Common myeloid progenitor, CD34-positive (primary cell): ENCODE measurements at regions of chr13 and their contacts with region 1.

Region 1: DNA sequence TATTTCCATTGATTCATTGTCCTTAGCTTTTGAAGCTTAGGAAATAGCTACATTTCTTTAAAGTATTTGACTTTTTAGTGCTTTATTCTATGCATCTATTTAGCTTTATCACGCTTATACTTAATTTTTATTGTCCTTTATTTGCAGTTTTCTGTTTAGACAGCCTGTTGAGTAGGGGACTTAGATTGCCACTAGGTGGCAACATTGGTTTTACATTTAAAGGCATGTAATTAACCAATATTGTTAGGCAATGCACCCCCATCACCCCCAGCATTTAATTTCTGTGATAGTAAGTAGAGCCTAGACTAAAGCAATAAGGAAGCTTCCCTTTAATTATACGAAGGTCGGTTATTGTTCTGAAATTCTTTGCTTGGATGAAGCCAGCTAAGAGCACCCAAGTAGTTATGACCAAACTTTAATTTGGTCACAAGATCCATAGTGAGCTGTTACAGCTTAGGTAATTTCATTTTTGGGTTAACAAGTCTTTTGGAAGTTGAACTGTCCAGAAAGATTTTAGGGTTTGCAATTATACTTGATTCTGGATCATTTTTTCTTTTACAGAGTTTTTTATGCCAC is 36.5 kb downstream of the B3GLCT start:
- DNase-seq: peak; percentile 47 to 65 (median 60)
- H3K4me3 ChIP-seq: no peak overlapping the region
- H3K27ac ChIP-seq: no peak overlapping the region
- H3K4me1 ChIP-seq: no peaks in the 10 kb centered on the region
- H3K27me3 ChIP-seq: no peaks in the 10 kb centered on the region

Region 2: DNA sequence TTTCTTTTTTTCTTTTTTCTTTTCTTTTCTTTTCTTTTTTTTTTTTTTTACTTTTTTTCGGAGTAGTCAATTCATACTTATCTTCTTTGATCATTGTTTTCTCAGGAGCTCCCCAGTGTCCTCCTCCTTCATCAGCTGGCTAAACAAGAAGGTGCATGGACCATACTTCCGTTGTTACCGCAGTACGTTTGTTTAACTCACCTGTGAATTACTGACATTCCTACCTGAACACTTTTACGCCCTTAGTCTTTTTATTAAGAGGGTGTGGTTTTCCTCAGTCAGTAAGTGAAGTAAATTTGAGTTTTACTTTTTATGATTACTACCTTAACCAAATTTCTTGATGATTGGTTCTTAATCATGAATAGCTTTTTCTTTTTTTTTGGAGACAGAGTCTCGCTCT is 10.6 kb after region 1 on chr13:
- CTCF ChIA-PET with region 1: interaction called, 15 read pairs
- POLR2A ChIA-PET with region 1: no interaction called
- DNase-seq: no peak
- H3K4me3 ChIP-seq: no peak overlapping the region
- H3K27ac ChIP-seq: no peak overlapping the region
- H3K4me1 ChIP-seq: no peaks in the 10 kb centered on the region
- H3K27me3 ChIP-seq: no peaks in the 10 kb centered on the region

Region 3: GRCh38 chr13:31424117-31424729 is 187.9 kb after region 1 on chr13:
- CTCF ChIA-PET with region 1: interaction called, 18 read pairs
- POLR2A ChIA-PET with region 1: no interaction called
- DNase-seq: peak; percentile 58 to 77 (median 74)
- H3K4me3 ChIP-seq: peak overlapping the region in 1 of 7 experiments; percentile 17
- H3K27ac ChIP-seq: no peak overlapping the region
- H3K4me1 ChIP-seq: no peaks in the 10 kb centered on the region
- H3K27me3 ChIP-seq: no peaks in the 10 kb centered on the region